Heart right ventricle (tissue), 16 donors: ENCODE measurements at regions of chr4 and their contacts with region 1.

Region 1: DNA sequence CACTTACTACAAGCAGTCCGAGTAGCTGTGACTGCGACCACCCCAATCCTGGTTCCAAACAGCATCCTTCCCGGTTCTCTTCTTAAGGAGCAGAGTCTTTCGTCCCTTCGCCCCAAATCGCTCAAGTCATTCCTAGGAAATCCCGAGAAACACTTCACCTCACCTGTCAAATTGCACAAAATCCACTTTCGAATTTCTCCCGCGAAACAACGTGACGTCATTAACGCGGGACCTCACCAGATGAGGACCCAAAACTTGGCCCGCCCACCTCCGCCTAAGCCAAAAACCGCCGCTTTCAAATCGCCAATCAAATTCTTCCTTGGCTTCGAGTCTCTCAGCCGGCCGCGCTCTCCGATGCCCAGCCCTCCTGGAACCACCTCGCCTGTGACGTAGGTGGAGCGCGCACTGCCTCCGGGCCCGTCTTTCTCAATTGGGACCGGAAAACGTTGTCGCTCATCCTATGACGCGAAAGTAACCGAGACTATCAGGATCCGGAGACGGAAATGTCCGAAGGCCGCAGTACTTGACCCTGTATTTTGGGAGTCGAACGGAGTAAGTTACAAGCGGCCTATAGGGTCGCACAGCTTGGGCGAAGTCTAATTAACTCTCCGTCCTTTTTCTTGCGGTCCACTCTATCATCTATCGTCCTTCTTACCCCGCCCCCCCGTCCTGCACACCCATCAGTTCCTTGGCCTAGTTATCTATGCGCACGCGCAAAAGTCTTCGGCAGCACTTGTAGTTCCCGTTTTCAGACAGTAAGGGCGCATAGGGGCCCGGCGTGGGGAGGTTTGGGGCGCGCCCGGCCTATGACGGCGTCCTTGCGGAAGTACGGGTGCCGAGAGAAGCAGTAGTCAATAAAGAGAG is at the starts of genes LARP7 and ZGRF1:
- DNase-seq: peak; percentile 98 to 99
- ATAC-seq: peak; percentile 97 to 98 (median 98)
- H3K4me3 ChIP-seq: peak within 1 kb of the TSS; percentile 66 to 76 (median 73)
- H3K27ac ChIP-seq: peak within 1 kb of the TSS; percentile 87 to 98 (median 95)
- H3K4me1 ChIP-seq: peaks cover 0 to 56% (median 26%) of the 10 kb centered on the region in 9 donors
- H3K27me3 ChIP-seq: no peaks in the 10 kb centered on the region
- CTCF ChIP-seq: peak; percentile 82 to 98 (median 95)
- total RNA-seq, gene LARP7: 46.4 to 58.3 (median 49.9) TPM
- total RNA-seq, gene ZGRF1: 0.81 to 3.2 (median 2.1) TPM

Region 2: GRCh38 chr4:112765317-112765975 is 128.5 kb after region 1 on chr4:
- intact Hi-C with region 1: loop called (anchors 1 to 10 kb)
- DNase-seq: no peak
- ATAC-seq: peak in 6 of 8 donors; percentile 22 to 66 (median 45)
- H3K4me3 ChIP-seq: no peak overlapping the region
- H3K27ac ChIP-seq: peak overlapping the region in 1 of 10 donors; percentile 10
- H3K4me1 ChIP-seq: peaks cover 0 to 8% (median 0%) of the 10 kb centered on the region in 9 donors
- H3K27me3 ChIP-seq: no peaks in the 10 kb centered on the region
- CTCF ChIP-seq: peak; percentile 14 to 58 (median 47)

Region 3: GRCh38 chr4:112938461-112939058 is 301.6 kb after region 1 on chr4:
- intact Hi-C with region 1: loop called in 9 of 10 experiments (anchors 2 to 10 kb)
- DNase-seq: no peak
- ATAC-seq: peak in 1 of 8 donors; percentile 27
- H3K4me3 ChIP-seq: no peak overlapping the region
- H3K27ac ChIP-seq: no peak overlapping the region
- H3K4me1 ChIP-seq: peaks cover 0 to 11% (median 0%) of the 10 kb centered on the region in 9 donors
- H3K27me3 ChIP-seq: no peaks in the 10 kb centered on the region
- CTCF ChIP-seq: peak; percentile 33 to 75 (median 66)

Region 4: GRCh38 chr4:112946127-112946526 is 309.2 kb after region 1 on chr4:
- intact Hi-C with region 1: loop called in 2 of 10 experiments (anchors 5 to 10 kb)
- DNase-seq: no peak
- ATAC-seq: no peak
- H3K4me3 ChIP-seq: no peak overlapping the region
- H3K27ac ChIP-seq: no peak overlapping the region
- H3K4me1 ChIP-seq: no peaks in the 10 kb centered on the region
- H3K27me3 ChIP-seq: no peaks in the 10 kb centered on the region
- CTCF ChIP-seq: no peak

Region 5: GRCh38 chr4:113094802-113095201 is 457.9 kb after region 1 on chr4:
- intact Hi-C with region 1: loop called in 4 of 10 experiments (anchors 10 kb)
- DNase-seq: no peak
- ATAC-seq: no peak
- H3K4me3 ChIP-seq: no peak overlapping the region
- H3K27ac ChIP-seq: no peak overlapping the region
- H3K4me1 ChIP-seq: no peaks in the 10 kb centered on the region
- H3K27me3 ChIP-seq: no peaks in the 10 kb centered on the region
- CTCF ChIP-seq: peak; percentile 28 to 72 (median 56)